Lower lobe of right lung (tissue), 2 donors: ENCODE measurements at regions of chr19 and their contacts with region 1.

Region 1: GRCh38 chr19:46265217-46265828 is 31.5 kb upstream of the HIF3A start:
- DNase-seq: no peak
- ATAC-seq: peak; percentile 84 to 90
- H3K4me3 ChIP-seq: no peak overlapping the region
- H3K27ac ChIP-seq: no peak overlapping the region
- H3K4me1 ChIP-seq: no peaks in the 10 kb centered on the region
- H3K27me3 ChIP-seq: peaks cover 16% of the 10 kb centered on the region
- CTCF ChIP-seq: peak; percentile 90

Region 2: DNA sequence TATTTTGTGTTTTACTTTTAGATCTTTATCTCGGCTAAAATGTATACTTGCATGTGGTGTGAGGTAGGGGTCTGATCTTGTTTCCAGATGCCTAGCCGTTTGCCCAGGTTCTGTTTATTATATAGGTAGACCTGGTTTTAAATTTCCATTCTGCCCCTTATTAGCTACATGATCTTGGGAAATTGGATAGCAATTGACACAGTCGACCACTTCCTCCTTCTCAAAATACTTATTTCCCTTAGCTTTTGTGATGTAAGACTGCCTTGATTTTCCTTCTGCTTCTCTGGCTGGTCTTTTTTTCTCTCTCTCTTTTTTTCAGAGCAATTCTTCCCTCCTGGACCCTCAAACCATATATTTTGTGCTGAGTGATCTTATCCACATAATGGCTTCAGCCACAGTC is 239.5 kb before region 1 on chr19:
- intact Hi-C with region 1: loop called (anchors 5 kb)
- DNase-seq: no peak
- ATAC-seq: no peak
- H3K4me3 ChIP-seq: no peak overlapping the region
- H3K27ac ChIP-seq: no peak overlapping the region
- H3K4me1 ChIP-seq: no peaks in the 10 kb centered on the region
- H3K27me3 ChIP-seq: peaks cover 67% of the 10 kb centered on the region
- CTCF ChIP-seq: no peak

Region 3: DNA sequence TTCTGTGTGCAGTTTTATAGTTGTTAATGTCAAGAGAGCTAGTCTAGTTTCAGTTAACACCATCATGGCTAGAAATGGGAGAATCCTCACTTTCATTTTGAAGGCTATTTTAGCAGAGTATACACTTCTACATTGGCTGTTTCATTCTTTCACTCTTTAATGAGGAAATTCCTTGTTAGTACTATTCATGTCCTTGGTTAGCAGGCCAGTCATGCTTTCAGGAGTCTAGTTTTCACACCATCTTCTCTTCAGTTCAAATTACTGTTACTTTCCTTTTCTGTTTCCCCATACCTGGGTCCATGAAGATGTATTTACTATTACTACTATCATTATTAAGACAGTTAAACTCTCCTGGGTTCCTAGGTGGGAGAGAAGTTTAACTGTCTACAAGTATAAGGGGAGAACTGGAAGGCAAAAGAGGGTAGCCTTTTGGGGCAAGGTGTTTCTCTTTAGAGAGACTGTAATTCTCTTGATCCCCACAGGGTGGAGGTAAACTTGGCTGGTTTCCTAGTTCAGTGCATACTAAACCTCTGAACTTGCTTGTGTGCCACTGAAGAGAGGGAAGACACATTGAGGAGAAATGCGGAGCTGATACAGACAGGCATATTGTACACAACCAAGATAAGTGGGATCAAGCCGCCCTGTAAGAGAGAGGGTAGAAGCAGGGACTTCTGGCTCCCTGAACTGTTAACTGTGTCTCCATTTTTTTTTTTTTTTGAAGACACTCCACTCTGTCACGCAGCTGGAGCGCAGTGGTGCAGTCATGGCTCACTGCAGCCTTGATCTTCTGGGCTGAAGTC is 183.2 kb before region 1 on chr19:
- intact Hi-C with region 1: loop called (anchors 5 kb)
- DNase-seq: no peak
- ATAC-seq: peak; percentile 70 to 71
- H3K4me3 ChIP-seq: no peak overlapping the region
- H3K27ac ChIP-seq: no peak overlapping the region
- H3K4me1 ChIP-seq: no peaks in the 10 kb centered on the region
- H3K27me3 ChIP-seq: peaks cover 15% of the 10 kb centered on the region
- CTCF ChIP-seq: peak; percentile 70

Region 4: DNA sequence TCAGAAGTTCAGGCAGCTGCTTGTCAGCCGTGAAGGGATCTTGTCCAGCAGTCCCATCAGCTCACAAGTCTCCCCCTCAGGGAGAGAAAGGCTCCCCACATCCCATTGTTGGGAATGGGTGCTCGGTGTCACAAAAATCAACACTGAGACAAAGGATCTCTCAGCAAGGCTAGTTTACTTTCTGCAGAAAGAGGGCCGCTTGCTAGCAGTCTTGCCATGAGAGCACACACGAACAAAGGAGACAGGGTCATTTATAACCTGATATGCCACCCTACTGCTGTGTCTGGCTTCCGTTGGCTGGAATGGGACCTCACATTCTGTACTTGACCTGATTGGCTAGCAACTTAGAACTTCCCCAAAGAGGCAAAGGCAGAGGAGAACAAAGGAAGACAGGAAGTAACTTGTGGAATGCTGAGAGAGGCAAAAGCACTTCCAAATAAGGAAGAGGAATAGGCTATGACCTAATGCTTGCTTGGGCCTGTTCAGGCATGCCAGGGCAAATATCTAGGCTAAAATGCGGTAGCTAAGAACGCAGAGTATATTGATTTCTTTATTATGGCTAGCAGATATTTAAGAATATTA is 132.1 kb before region 1 on chr19:
- intact Hi-C with region 1: no loop called
- DNase-seq: no peak
- ATAC-seq: peak; percentile 37 to 61
- H3K4me3 ChIP-seq: no peak overlapping the region
- H3K27ac ChIP-seq: peak overlapping the region; percentile 72
- H3K4me1 ChIP-seq: peaks cover 18% of the 10 kb centered on the region
- H3K27me3 ChIP-seq: no peaks in the 10 kb centered on the region
- CTCF ChIP-seq: no peak

Region 5: GRCh38 chr19:46478356-46478986 is 213.1 kb after region 1 on chr19:
- intact Hi-C with region 1: no loop called
- DNase-seq: no peak
- ATAC-seq: no peak
- H3K4me3 ChIP-seq: no peak overlapping the region
- H3K27ac ChIP-seq: no peak overlapping the region
- H3K4me1 ChIP-seq: peaks cover 5% of the 10 kb centered on the region
- H3K27me3 ChIP-seq: peaks cover 6% of the 10 kb centered on the region
- CTCF ChIP-seq: no peak